Mucosa of descending colon (tissue), 3 donors: ENCODE measurements at regions of chr2 and their contacts with region 1.

Region 1: DNA sequence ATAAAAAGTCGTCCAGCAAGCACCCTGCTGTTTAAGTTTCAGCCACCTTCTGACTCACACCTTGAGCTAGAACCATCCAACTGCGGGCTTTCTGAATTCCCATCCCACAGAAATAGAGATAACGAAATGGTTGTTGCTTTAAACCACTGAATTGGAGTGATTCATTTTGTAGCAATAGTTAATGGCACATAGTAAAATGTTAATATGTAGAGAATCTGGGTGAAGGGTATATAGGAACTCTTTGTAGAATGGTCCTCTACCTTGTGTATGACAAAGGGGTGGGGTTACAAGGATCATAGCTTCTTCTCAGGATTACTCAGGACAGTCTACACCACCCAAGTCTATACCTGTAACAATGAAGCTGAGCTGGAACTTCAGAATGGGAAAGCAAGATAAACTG is 2.4 kb upstream of the MAPRE3 start:
- DNase-seq: peak in 1 of 3 donors; percentile 46
- ATAC-seq: peak; percentile 81
- H3K4me3 ChIP-seq: no peak overlapping the region
- H3K4me1 ChIP-seq: peaks cover 32% of the 10 kb centered on the region
- CTCF ChIP-seq: no peak

Region 2: DNA sequence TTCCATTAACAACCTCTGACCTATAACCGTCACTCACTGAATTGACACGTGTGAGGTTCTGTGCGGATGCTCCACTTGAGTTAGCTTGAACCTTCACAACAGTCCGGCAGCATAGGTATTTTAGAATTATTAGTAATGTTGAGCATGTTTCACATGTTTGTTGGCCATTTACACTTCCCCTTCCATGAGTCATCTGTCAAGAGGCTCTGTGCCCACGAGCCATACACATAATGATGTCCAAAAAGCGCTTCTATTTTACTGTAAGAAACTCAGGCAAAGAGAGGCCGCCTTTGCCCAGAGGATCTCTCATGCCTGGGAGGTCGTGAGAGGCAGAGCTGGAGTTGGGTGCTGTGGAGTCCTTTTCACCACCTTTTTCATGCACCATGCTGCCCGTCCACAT is 35.9 kb after region 1 on chr2:
- intact Hi-C with region 1: no loop called
- DNase-seq: no peak
- ATAC-seq: no peak
- H3K4me3 ChIP-seq: no peak overlapping the region
- H3K4me1 ChIP-seq: no peaks in the 10 kb centered on the region
- CTCF ChIP-seq: no peak

Region 3: GRCh38 chr2:27016801-27017325 is 48.9 kb after region 1 on chr2:
- intact Hi-C with region 1: loop called (anchors 5 to 10 kb)
- DNase-seq: peak in 2 of 3 donors; percentile 57 to 83
- ATAC-seq: peak; percentile 28
- H3K4me3 ChIP-seq: no peak overlapping the region
- H3K4me1 ChIP-seq: peaks cover 22% of the 10 kb centered on the region
- CTCF ChIP-seq: no peak

Region 4: DNA sequence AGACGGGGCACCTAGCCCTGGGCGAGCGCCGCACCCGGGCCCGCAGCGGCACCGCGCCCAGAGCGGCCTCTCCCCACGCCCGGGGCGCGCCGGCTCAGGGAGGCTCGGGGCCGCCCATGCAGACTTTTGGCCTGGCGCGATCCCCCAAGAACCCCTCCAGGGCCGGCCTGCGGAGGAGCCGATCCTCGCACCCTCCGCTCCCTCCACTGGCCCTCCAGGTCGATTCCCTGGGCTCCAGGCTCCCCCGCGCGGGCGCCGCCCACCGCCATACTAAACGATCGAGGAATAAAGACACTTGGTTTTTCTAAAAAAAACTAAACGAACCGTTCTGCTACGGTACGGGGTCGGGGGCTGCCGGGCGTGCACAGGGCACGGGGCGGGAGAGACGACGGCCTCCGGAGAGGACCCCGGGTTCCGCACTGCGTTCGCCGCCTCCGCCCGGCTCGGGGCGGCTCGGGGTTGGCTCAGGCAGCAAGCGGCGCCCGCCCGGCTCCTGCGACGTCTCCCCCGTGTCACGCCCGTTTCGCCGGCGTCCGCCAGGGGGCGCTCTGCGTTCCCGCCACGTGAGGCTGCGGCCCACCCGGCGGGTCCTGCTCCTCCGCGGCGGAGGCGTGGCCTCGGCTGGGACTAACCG is 118.2 kb after region 1 on chr2:
- intact Hi-C with region 1: loop called in 1 of 2 experiments (anchors 10 kb)
- DNase-seq: peak; percentile 95 to 98 (median 96)
- ATAC-seq: peak; percentile 93
- H3K4me3 ChIP-seq: peak overlapping the region; percentile 28
- H3K4me1 ChIP-seq: peaks cover 30% of the 10 kb centered on the region
- CTCF ChIP-seq: peak; percentile 97

Region 5: GRCh38 chr2:27271631-27272340 is 303.8 kb after region 1 on chr2:
- intact Hi-C with region 1: loop called in 1 of 2 experiments (anchors 10 kb)
- DNase-seq: no peak
- ATAC-seq: no peak
- H3K4me3 ChIP-seq: no peak overlapping the region
- H3K4me1 ChIP-seq: no peaks in the 10 kb centered on the region
- CTCF ChIP-seq: no peak